ENCODE measurements at regions of chr15 and their contacts with region 1.

Region 1: DNA sequence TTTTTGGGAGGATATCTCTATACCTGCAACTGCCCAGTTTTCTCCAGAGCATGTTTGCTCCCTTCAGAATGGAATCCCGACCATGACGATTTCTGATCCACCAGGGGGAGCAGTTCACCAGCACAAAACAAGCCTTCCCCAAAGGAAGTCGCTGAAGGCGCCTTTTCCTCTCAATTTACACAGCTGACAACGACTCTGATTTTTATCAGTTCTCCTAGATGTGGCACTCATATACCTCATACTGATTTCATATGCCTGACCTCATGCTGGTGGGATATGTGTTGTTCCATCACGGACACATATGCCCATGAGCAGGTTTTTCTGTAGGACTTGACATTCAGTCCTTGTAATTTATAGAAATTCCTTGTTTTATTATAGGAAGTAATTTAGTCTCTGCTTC is 1028.2 kb downstream of the MCTP2 start:
- DNase-seq: peak; percentile 26 to 77
- ATAC-seq: peak; percentile 52 to 69 (median 56)
- H3K4me3 ChIP-seq: no peak overlapping the region
- H3K4me3 Mint-ChIP-seq: no peak overlapping the region
- H3K27ac ChIP-seq: no peak overlapping the region
- H3K27ac Mint-ChIP-seq: no peak overlapping the region
- H3K4me1 ChIP-seq: no peaks in the 10 kb centered on the region
- H3K4me1 Mint-ChIP-seq: peaks cover 6 to 7% of the 10 kb centered on the region in 2 donors
- H3K27me3 ChIP-seq: peaks cover 20% of the 10 kb centered on the region
- H3K27me3 Mint-ChIP-seq: peaks cover 44 to 94% of the 10 kb centered on the region in 2 donors
- CTCF ChIP-seq: peak; percentile 86

Region 2: GRCh38 chr15:95152741-95153140 is 106.8 kb before region 1 on chr15:
- intact Hi-C with region 1: no loop called
- DNase-seq: no peak
- ATAC-seq: no peak
- H3K4me3 ChIP-seq: no peak overlapping the region
- H3K4me3 Mint-ChIP-seq: no peak overlapping the region
- H3K27ac ChIP-seq: no peak overlapping the region
- H3K27ac Mint-ChIP-seq: no peak overlapping the region
- H3K4me1 ChIP-seq: no peaks in the 10 kb centered on the region
- H3K4me1 Mint-ChIP-seq: no peaks in the 10 kb centered on the region
- H3K27me3 ChIP-seq: no peaks in the 10 kb centered on the region
- H3K27me3 Mint-ChIP-seq: no peaks in the 10 kb centered on the region
- CTCF ChIP-seq: no peak

Region 3: GRCh38 chr15:96345560-96346399 is 1086.3 kb after region 1 on chr15:
- intact Hi-C with region 1: loop called (anchors 1 kb)
- DNase-seq: peak in 1 of 2 donors; percentile 38
- ATAC-seq: peak in 2 of 3 donors; percentile 62 to 75
- H3K4me3 ChIP-seq: no peak overlapping the region
- H3K4me3 Mint-ChIP-seq: no peak overlapping the region
- H3K27ac ChIP-seq: no peak overlapping the region
- H3K27ac Mint-ChIP-seq: no peak overlapping the region
- H3K4me1 ChIP-seq: peaks cover 8% of the 10 kb centered on the region
- H3K4me1 Mint-ChIP-seq: peaks cover 7 to 9% of the 10 kb centered on the region in 2 donors
- H3K27me3 ChIP-seq: peaks cover 90% of the 10 kb centered on the region
- H3K27me3 Mint-ChIP-seq: peaks cover 92 to 95% of the 10 kb centered on the region in 2 donors
- CTCF ChIP-seq: peak; percentile 24

Region 4: GRCh38 chr15:97234851-97235610 is 1975.5 kb after region 1 on chr15:
- intact Hi-C with region 1: loop called (anchors 1 kb)
- DNase-seq: peak; percentile 15 to 42
- ATAC-seq: no peak
- H3K4me3 ChIP-seq: no peak overlapping the region
- H3K4me3 Mint-ChIP-seq: no peak overlapping the region
- H3K27ac ChIP-seq: no peak overlapping the region
- H3K27ac Mint-ChIP-seq: no peak overlapping the region
- H3K4me1 ChIP-seq: no peaks in the 10 kb centered on the region
- H3K4me1 Mint-ChIP-seq: no peaks in the 10 kb centered on the region
- H3K27me3 ChIP-seq: no peaks in the 10 kb centered on the region
- H3K27me3 Mint-ChIP-seq: peaks cover 0 to 2% of the 10 kb centered on the region in 2 donors
- CTCF ChIP-seq: peak; percentile 56

Measured in natural killer cell (primary cell).